GM13977 (cell line): ENCODE measurements at regions of chr5 and their contacts with region 1.

Region 1: DNA sequence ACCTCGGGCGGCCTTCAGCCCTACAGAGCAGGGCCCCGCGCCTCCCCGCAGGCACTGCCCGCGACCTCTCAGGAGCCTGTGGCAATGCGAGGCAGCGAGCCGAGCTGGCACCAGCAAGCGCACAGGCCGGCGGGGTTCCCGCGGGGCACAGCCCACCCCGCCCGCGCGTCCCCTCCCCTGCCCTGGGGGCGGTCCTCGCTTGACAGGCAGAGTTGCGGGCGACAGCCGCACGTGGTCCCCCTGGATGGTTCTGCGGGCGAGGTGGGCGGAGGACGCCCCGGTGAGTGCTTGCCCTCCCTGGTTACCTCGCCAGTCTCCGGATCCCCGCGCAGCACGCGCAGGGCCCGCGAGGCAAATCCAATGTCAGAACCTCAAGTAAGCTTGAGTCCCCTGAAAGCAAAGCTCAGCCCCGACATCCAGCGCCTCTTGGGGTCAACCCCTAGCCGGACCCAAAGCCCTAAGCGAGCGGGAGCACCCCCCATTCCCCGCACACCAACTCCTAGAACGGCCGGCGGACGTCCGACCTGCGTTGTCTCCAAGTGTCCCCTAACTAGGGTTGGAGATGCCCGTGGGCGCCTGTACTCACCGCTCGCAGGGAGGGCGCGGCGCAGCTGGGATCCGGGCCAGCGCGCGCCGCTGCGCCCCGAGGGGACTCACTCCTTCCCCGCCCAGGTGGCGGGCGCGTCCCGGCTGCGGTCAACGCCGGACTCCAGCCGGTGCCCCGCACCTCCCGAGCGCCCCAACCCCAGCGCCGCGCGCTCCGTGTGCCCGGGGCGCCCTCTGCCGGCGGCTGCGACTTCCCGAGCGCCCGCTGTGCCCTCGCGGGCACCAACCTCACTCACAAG is at the start of gene DRD1:
- DNase-seq: peak; percentile 83
- CTCF ChIP-seq: peak; percentile 82

Region 2: DNA sequence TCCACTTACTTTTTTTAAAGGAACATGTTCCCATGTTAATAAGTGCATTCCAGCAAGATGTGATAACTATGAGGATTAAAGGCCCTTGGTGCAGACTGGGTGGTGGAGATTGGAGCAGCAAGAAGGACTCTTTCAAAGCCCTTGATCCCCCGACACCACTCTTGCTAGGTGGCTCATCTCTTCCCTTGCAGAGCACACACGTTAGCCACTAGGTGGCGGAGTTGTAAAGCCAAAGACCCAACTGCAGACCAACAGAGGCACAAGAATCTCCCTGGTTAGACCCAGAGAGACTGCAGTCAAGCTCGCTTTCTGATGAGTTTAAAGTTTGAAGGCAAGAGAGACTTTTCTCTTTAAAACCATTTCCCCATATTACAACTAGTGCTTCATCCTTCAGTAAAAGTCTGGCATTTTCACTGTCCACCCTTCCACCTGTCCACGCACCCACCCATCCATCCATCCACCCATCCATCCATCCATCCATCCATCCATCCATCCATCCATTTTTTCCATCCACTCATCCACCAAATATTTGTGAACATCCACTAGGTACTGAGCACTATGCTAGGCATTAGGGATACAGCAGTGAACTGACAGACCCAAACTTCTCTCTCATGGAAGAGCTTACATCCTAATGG is 493.0 kb before region 1 on chr5:
- in situ Hi-C with region 1: loop called (anchors 10 kb)
- DNase-seq: peak; percentile 73
- CTCF ChIP-seq: peak; percentile 92

Region 3: DNA sequence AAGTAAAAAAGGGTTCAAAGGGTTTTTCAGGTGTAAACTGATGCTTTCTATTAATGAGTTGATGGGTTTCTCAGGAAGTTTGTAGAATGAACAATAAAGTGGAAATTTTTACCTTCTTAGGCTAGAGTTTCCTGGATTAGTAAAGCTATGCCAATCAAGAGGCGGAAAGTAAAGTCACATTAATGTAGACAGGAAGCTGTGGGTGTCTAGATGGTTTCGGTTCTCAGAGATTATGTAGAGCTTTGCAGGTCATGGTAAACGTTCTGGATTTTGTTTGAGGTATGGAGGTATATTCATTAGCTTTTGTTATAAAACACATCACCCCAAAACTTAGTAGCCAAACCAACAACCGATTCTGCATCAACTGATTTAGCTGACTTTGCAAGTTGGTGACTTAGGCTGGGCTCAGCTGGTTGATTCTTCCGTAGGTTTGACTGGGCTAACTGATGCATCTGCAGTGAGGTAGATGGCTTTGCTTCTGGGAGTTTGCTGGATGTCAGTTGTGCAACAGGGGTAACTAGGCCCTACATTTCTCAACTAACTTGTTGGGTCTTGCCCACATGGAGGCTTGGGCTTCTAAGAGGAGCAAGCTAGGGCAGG is 446.1 kb before region 1 on chr5:
- in situ Hi-C with region 1: no loop called
- DNase-seq: no peak
- CTCF ChIP-seq: no peak

Region 4: GRCh38 chr5:175306411-175306810 is 137.9 kb before region 1 on chr5:
- in situ Hi-C with region 1: no loop called
- DNase-seq: no peak
- CTCF ChIP-seq: no peak

Region 5: DNA sequence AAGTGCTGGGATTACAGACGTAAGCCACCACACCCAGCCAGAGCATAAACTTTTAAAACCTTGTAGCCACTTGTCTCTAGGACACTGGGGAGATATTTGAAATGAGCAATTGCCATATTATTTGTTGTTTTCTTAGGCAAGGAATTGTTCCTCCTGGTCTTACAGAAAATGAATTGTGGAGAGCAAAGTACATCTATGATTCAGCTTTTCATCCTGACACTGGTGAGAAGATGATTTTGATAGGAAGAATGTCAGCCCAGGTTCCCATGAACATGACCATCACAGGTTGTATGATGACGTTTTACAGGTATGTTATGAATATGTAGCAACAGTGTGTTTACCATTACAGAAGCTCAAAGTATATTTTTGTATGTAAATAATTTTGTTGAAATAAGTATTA is 64.6 kb after region 1 on chr5:
- in situ Hi-C with region 1: no loop called
- DNase-seq: no peak
- CTCF ChIP-seq: no peak